Esophagus muscularis mucosa (tissue), 4 donors: ENCODE measurements at regions of chr10 and their contacts with region 1.

Region 1: GRCh38 chr10:7417103-7417623 is 6.3 kb upstream of the SFMBT2 start:
- DNase-seq: no peak
- H3K4me3 ChIP-seq: no peak overlapping the region
- H3K27ac ChIP-seq: no peak overlapping the region
- H3K4me1 ChIP-seq: peaks cover 10 to 13% (median 10%) of the 10 kb centered on the region in 4 donors
- H3K27me3 ChIP-seq: peaks cover 0 to 20% (median 5%) of the 10 kb centered on the region in 4 donors
- CTCF ChIP-seq: peak; percentile 45 to 60 (median 47)
- EP300 ChIP-seq: no peak
- POLR2A ChIP-seq: no peak

Region 2: GRCh38 chr10:6674291-6674690 is 742.9 kb before region 1 on chr10:
- intact Hi-C with region 1: loop called (anchors 5 kb)
- DNase-seq: no peak
- H3K4me3 ChIP-seq: no peak overlapping the region
- H3K27ac ChIP-seq: no peak overlapping the region
- H3K4me1 ChIP-seq: peaks cover 0 to 4% (median 0%) of the 10 kb centered on the region in 4 donors
- H3K27me3 ChIP-seq: peaks cover 0 to 10% (median 0%) of the 10 kb centered on the region in 4 donors
- CTCF ChIP-seq: no peak
- EP300 ChIP-seq: no peak
- POLR2A ChIP-seq: no peak

Region 3: GRCh38 chr10:7649673-7650300 is 232.6 kb after region 1 on chr10:
- intact Hi-C with region 1: no loop called
- DNase-seq: no peak
- H3K4me3 ChIP-seq: no peak overlapping the region
- H3K27ac ChIP-seq: peak overlapping the region in 2 of 4 donors; percentile 5 to 29
- H3K4me1 ChIP-seq: peaks cover 0 to 16% (median 5%) of the 10 kb centered on the region in 4 donors
- H3K27me3 ChIP-seq: no peaks in the 10 kb centered on the region
- CTCF ChIP-seq: no peak
- EP300 ChIP-seq: no peak
- POLR2A ChIP-seq: no peak